ENCODE measurements at regions of chr9 and their contacts with region 1.

Region 1: DNA sequence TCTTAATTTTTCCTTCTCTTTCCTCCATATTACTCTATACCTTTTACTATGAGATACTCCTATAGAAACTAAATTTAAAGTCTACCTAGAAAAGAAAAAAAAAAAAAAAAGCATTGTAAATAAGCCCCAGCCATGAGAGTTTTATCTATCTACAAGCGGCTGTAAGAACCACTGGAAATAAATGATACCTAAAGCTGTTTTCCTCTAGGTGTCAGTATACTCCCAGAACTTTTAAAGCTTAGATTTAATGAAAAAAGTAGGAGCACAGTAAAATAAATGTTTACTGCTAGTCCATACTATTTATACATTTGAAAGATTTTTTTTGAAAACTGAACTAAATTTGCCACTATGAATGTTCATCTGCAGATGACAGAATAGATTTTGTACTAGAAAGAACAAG is 26.2 kb downstream of the TYRP1 start:
- DNase-seq: peak; percentile 35
- H3K4me3 Mint-ChIP-seq: no peak overlapping the region
- H3K27ac Mint-ChIP-seq: no peak overlapping the region
- H3K4me1 Mint-ChIP-seq: peaks cover 32% of the 10 kb centered on the region
- H3K27me3 Mint-ChIP-seq: no peaks in the 10 kb centered on the region
- CTCF ChIP-seq: peak; percentile 31

Region 2: DNA sequence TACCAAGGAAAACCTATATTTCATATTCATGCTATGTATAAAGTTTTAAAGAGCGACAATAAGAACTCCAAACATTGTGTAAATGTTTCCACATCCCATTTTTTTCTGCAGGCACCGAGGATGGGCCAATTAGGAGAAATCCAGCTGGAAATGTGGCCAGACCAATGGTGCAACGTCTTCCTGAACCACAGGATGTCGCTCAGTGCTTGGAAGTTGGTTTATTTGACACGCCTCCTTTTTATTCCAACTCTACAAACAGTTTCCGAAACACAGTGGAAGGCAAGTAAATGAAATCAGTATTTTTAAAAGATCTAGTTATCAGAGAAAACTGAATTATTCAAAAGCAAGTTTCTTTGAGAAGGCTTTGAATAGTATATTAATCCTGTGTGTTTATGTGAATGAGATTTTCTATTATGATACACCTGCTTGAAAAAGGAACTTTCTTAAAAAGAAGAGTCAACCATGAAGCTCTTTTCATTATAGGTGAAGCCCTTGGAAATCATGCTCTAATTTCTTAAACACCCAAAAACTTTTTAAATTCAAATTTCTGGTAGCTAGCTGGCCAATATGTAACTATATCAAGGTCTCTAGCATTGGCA is 17.2 kb before region 1 on chr9:
- CTCF ChIA-PET with region 1: interaction called, 20 read pairs
- POLR2A ChIA-PET with region 1: no interaction called
- intact Hi-C with region 1: no loop called
- DNase-seq: peak; percentile 76
- H3K4me3 Mint-ChIP-seq: no peak overlapping the region
- H3K27ac Mint-ChIP-seq: no peak overlapping the region
- H3K4me1 Mint-ChIP-seq: peaks cover 16% of the 10 kb centered on the region
- H3K27me3 Mint-ChIP-seq: no peaks in the 10 kb centered on the region
- CTCF ChIP-seq: peak; percentile 58

Region 3: DNA sequence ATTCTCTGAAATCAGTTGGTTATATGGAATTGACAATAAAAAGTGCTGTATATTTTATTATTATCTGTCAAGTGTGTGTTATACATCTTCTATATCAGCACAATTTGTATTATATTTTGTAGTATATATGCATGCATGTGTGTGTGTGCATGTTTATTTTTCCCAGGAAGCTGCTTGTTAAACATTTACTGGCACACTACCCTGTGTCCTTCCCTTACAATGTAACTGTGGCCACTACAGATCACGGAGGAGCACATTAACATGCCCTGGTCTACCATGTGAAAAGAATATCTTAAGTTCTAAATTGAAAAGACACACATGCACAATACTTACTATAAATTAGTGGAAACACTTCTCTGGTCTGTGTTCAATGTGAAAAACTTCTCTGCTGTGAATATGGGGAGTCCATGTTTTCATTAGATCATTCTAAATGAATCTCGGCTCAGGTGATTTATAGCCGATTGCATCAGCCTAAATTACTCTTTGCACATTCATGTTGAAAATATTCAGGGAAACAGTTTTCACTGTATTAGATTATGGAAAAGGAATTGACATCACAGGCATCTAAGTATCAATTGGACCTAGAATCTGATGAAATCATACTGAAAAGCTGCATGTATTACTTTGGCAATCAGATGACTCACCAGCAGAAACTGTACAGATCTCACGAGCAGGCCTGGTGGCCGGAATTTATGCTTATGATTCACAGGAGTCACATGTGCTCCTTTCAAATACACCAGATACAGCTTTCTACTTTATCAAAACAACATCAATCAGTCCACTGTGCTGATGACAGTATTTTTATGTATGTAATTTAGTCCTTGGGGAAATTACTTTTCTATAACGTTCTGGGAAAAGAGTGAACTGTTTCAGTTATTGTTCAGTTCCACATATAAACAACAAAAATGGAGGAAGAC is 94.8 kb after region 1 on chr9:
- CTCF ChIA-PET with region 1: interaction called, 7 read pairs
- POLR2A ChIA-PET with region 1: interaction called, 10 read pairs
- intact Hi-C with region 1: loop called (anchors 2 kb)
- DNase-seq: peak; percentile 99
- H3K4me3 Mint-ChIP-seq: peak overlapping the region; percentile 71
- H3K27ac Mint-ChIP-seq: peak overlapping the region; percentile 97
- H3K4me1 Mint-ChIP-seq: peaks cover 71% of the 10 kb centered on the region
- H3K27me3 Mint-ChIP-seq: no peaks in the 10 kb centered on the region
- CTCF ChIP-seq: peak; percentile 7

Region 4: DNA sequence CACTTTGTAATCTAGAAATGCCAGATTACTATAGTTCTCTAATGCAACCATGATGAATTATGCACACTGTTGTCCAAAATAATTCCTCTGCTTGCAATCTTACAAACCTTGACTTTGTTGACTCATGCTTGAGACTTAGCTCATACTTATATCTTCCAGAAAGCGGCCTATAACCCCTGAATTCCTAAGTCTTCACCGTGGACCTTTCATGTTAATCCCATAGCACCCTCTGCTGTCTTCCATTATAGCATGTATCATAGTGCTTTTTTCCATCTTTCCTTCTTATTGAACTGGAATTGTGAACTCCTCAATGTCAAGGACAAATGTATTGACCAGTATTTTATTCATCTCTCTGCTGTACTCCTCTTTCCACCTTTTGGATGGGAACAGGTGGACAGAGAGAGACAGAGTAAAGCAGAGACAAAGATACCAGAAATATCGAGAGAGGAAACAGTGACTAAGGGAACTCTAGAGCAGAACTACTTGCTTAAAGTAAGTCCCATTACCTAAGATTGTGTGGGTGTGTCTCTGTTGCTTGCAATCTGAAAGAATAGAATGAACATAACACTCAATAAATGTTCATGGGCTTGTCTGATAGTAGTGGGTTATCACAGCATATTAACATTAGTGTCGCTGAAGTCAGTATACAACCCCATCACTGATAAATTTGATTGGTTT is 165.4 kb after region 1 on chr9:
- CTCF ChIA-PET with region 1: interaction called, 75 read pairs
- POLR2A ChIA-PET with region 1: interaction called, 9 read pairs
- intact Hi-C with region 1: loop called (anchors 1 kb)
- DNase-seq: peak; percentile 84
- H3K4me3 Mint-ChIP-seq: no peak overlapping the region
- H3K27ac Mint-ChIP-seq: no peak overlapping the region
- H3K4me1 Mint-ChIP-seq: peaks cover 13% of the 10 kb centered on the region
- H3K27me3 Mint-ChIP-seq: no peaks in the 10 kb centered on the region
- CTCF ChIP-seq: peak; percentile 62

Region 5: DNA sequence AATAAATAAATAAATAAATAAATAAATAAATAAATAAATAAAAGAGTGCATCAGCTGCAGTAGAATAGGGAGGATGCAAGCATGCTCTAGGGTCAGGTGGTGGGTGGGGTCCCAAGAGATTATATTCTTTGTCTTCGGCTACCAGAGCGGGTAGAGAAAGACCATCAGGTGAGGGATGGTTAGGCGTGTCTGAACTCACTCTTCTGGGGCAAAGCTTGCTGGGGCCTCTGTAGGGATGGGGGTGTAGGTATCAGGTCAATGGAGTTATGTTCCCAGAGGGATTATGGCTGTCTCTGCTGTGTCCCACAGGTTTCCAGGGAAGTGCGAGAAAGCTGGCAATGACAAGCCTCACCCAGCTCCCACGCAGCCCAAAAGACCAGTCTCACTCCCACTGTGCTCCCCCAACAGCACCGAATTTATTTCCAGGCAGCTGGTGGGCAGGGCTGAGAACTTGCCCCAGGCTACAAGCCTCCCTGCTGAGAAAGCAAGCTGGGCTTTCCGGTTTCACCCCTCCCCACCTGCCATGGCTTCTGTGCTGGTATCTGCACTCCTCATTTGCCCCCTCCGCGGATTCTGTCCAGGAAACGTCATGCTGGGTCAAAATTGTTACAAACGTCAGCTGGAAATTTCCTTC is 236.2 kb after region 1 on chr9:
- CTCF ChIA-PET with region 1: no interaction called
- POLR2A ChIA-PET with region 1: no interaction called
- intact Hi-C with region 1: no loop called
- DNase-seq: no peak
- H3K4me3 Mint-ChIP-seq: no peak overlapping the region
- H3K27ac Mint-ChIP-seq: no peak overlapping the region
- H3K4me1 Mint-ChIP-seq: peaks cover 11% of the 10 kb centered on the region
- H3K27me3 Mint-ChIP-seq: no peaks in the 10 kb centered on the region
- CTCF ChIP-seq: no peak

Region 6: DNA sequence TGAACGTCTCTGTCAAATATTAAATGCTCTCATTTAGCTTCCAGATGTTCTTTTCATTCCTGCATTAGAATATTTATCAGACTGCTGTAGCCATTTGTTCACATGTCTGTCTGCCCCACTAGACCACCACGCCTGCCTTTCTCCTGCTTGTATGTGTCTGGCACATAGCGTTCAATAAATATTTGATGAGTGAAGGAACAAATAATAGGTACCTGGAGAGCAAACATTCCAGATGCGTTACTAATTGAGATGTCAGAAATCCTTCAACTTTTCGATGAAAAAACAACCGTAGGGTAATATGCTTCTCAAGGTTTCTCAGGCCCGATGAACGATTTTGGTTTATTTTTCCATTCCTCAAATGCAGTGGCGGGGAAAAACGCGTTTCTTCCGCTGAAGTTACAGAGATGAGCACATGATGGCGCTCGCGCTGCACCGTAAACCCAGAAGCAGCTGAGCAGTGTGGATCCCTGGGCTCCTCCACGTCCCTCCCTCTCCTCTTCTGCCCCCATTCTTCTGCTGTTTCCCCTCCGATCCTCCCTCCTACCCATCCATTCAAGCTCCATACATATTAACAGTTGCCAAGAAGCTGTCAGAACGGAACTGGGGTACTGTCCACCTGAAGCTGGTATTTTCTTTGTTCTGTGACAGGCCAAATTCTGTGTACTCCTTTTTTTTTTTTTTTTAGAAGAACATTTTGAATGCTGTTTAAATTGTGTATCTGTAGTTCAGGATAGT is 314.7 kb after region 1 on chr9:
- CTCF ChIA-PET with region 1: interaction called, 7 read pairs
- POLR2A ChIA-PET with region 1: no interaction called
- intact Hi-C with region 1: loop called (anchors 5 kb)
- DNase-seq: peak; percentile 68
- H3K4me3 Mint-ChIP-seq: peak overlapping the region; percentile 30
- H3K27ac Mint-ChIP-seq: no peak overlapping the region
- H3K4me1 Mint-ChIP-seq: peaks cover 16% of the 10 kb centered on the region
- H3K27me3 Mint-ChIP-seq: no peaks in the 10 kb centered on the region
- CTCF ChIP-seq: peak; percentile 83

Region 7: GRCh38 chr9:13410566-13411031 is 691.2 kb after region 1 on chr9:
- CTCF ChIA-PET with region 1: no interaction called
- POLR2A ChIA-PET with region 1: no interaction called
- intact Hi-C with region 1: loop called (anchors 5 kb)
- DNase-seq: peak; percentile 83
- H3K4me3 Mint-ChIP-seq: no peak overlapping the region
- H3K27ac Mint-ChIP-seq: no peak overlapping the region
- H3K4me1 Mint-ChIP-seq: no peaks in the 10 kb centered on the region
- H3K27me3 Mint-ChIP-seq: no peaks in the 10 kb centered on the region
- CTCF ChIP-seq: no peak